Kidney (tissue), 22 donors: ENCODE measurements at regions of chr21 and their contacts with region 1.

Region 1: GRCh38 chr21:42440187-42440792 is 36.6 kb downstream of the UBASH3A start:
- DNase-seq: peak in 1 of 5 donors; percentile 22
- H3K4me3 ChIP-seq: no peak overlapping the region
- H3K27ac ChIP-seq: no peak overlapping the region
- H3K4me1 ChIP-seq: no peaks in the 10 kb centered on the region
- H3K27me3 ChIP-seq: no peaks in the 10 kb centered on the region
- CTCF ChIP-seq: no peak

Region 2: GRCh38 chr21:42337830-42338728 is 102.2 kb before region 1 on chr21:
- intact Hi-C with region 1: loop called (anchors 10 kb)
- DNase-seq: peak; percentile 85 to 94 (median 90)
- H3K4me3 ChIP-seq: no peak overlapping the region
- H3K27ac ChIP-seq: no peak overlapping the region
- H3K4me1 ChIP-seq: peaks cover 0 to 9% (median 0%) of the 10 kb centered on the region in 3 donors
- H3K27me3 ChIP-seq: no peaks in the 10 kb centered on the region
- CTCF ChIP-seq: peak; percentile 67

Region 3: DNA sequence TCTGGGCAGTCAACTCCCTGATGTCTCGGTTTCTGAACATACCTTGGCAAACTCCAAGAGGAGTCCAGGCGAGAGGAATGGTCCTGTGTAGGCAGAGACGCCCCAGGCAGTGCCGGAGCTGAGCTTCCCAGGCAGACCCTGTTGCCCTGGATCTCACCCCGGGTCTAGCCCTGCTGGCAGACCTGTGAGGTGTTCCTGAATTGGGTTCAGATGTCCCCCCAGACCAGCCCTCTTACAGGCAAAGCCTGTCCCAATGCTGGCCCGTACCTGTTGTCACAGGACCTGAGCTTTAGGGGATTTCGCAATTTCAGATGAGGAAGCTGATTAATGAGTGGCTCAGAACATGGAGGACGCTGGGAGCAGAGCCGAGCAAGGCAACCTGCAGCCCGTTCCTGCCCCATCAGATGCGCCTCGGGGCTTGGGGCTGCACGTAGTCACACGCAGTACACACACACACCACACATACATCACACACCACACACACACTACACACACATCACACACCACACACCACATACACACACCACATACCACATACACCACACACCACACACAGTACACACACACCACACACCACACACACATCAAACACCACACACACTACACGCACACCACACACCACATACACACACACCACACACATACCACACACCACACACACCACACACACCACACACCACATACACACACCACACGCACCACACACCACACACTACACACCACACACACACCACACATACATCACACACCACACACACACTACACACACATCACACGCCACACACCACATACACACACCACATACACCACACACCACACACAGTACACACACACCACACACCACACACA is 174.7 kb after region 1 on chr21:
- intact Hi-C with region 1: no loop called
- DNase-seq: peak; percentile 59 to 88 (median 73)
- H3K4me3 ChIP-seq: peak overlapping the region; percentile 26 to 86 (median 62)
- H3K27ac ChIP-seq: peak overlapping the region; percentile 66 to 95
- H3K4me1 ChIP-seq: peaks cover 3 to 18% (median 14%) of the 10 kb centered on the region in 3 donors
- H3K27me3 ChIP-seq: no peaks in the 10 kb centered on the region
- CTCF ChIP-seq: no peak

Region 4: DNA sequence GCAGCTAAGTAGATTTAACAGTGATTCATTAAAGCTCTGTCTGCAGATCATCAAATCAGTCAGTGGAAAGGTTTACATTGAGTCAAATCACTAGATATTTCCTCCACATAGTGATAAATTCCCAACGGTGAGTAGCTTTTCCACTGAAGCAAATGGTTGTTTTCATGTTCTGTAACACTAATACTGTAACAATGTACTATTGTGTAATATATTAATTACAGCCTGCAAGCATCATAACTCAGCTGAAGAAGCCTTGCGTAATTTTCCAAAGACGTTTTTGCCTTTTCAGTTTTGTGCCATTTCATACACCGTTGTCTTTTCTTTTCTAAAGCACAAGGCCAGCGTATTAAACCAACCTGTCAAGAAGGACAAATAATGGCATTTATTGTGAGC is 196.2 kb after region 1 on chr21:
- intact Hi-C with region 1: no loop called
- DNase-seq: no peak
- H3K4me3 ChIP-seq: no peak overlapping the region
- H3K27ac ChIP-seq: no peak overlapping the region
- H3K4me1 ChIP-seq: no peaks in the 10 kb centered on the region
- H3K27me3 ChIP-seq: no peaks in the 10 kb centered on the region
- CTCF ChIP-seq: no peak